Activated CD4-positive, alpha-beta T cell treated with anti-CD3 and anti-CD28 coated beads, Interleukin-2, amount 10 ng/mL, durations not matched to agents 7 days and 5 days (primary cell): ENCODE measurements at regions of chr10 and their contacts with region 1.

Region 1: GRCh38 chr10:71569775-71570588 is 149.6 kb downstream of the C10orf105 start:
- DNase-seq: peak; percentile 84
- H3K4me3 Mint-ChIP-seq: no peak overlapping the region
- H3K27ac Mint-ChIP-seq: no peak overlapping the region
- H3K4me1 Mint-ChIP-seq: no peaks in the 10 kb centered on the region
- H3K27me3 Mint-ChIP-seq: no peaks in the 10 kb centered on the region

Region 2: GRCh38 chr10:71314028-71314693 is 255.8 kb before region 1 on chr10:
- CTCF ChIA-PET with region 1: interaction called, 10 read pairs
- POLR2A ChIA-PET with region 1: no interaction called
- DNase-seq: peak; percentile 52
- H3K4me3 Mint-ChIP-seq: no peak overlapping the region
- H3K27ac Mint-ChIP-seq: no peak overlapping the region
- H3K4me1 Mint-ChIP-seq: peaks cover 25% of the 10 kb centered on the region
- H3K27me3 Mint-ChIP-seq: peaks cover 2% of the 10 kb centered on the region

Region 3: DNA sequence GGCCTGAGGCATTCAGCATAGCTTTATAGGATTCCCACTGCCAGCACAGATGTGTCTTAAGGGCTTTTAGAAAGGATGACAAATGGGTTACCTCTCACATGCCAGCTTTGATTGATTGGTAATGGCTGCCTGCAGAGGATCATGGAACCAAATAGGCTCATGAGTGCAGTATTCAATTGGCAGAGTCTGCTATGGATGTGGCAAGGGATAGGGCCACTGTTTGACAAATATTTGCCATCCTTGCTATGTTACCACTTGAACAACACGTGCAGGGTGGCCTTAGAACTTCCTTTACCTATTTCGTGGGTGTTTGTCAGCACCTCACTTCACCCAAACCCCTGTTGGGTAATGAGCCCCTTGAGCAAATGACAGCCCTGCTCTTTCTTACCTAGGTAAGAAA is 10.4 kb after region 1 on chr10:
- CTCF ChIA-PET with region 1: interaction called, 15 read pairs
- POLR2A ChIA-PET with region 1: no interaction called
- DNase-seq: no peak
- H3K4me3 Mint-ChIP-seq: no peak overlapping the region
- H3K27ac Mint-ChIP-seq: no peak overlapping the region
- H3K4me1 Mint-ChIP-seq: no peaks in the 10 kb centered on the region
- H3K27me3 Mint-ChIP-seq: no peaks in the 10 kb centered on the region

Region 4: DNA sequence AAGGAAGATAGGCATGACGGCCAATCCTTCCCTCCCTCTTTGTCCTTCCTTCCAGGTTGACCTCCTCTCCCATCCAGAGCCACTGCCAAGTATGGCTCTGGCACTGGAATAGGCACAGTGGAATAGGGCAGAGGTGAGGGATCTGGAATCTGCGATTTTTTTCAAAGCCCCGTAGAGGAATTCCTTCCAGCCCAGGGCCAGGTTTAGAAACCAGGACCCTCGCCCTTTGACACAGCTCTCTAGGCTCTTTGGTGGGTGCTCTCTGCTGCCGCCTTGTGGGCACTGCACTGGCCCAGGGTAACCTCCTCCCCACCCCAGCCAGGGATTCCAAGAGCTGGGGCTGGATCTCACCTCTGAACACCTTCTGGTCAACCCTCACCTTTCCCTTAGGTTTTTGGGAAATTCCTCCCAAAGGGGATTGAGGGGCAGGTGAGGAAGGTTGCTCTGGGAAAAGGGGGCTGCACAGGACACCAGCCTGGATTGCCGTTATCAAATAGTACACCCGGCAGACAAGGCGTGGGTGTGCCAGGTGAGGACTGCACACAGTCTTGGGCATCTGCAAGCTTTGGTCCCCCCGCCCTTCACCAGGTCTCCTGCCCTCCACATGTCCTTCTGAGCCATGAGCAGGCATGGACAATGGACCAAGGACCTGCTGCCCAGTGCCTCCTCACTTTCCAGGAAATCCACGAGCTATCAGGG is 126.8 kb after region 1 on chr10:
- CTCF ChIA-PET with region 1: no interaction called
- POLR2A ChIA-PET with region 1: no interaction called
- DNase-seq: peak; percentile 65
- H3K4me3 Mint-ChIP-seq: no peak overlapping the region
- H3K27ac Mint-ChIP-seq: peak overlapping the region; percentile 60
- H3K4me1 Mint-ChIP-seq: peaks cover 52% of the 10 kb centered on the region
- H3K27me3 Mint-ChIP-seq: no peaks in the 10 kb centered on the region